ENCODE measurements at regions of chr1 and their contacts with region 1.

Region 1: GRCh38 chr1:205977402-205978014 is 25.7 kb downstream of the RAB7B start:
- DNase-seq: peak; percentile 78 to 88 (median 82)
- H3K4me3 ChIP-seq: no peak overlapping the region
- H3K27ac ChIP-seq: no peak overlapping the region
- H3K4me1 ChIP-seq: peaks cover 0 to 5% (median 0%) of the 10 kb centered on the region in 3 donors
- H3K27me3 ChIP-seq: no peaks in the 10 kb centered on the region
- CTCF ChIP-seq: peak; percentile 98

Region 2: DNA sequence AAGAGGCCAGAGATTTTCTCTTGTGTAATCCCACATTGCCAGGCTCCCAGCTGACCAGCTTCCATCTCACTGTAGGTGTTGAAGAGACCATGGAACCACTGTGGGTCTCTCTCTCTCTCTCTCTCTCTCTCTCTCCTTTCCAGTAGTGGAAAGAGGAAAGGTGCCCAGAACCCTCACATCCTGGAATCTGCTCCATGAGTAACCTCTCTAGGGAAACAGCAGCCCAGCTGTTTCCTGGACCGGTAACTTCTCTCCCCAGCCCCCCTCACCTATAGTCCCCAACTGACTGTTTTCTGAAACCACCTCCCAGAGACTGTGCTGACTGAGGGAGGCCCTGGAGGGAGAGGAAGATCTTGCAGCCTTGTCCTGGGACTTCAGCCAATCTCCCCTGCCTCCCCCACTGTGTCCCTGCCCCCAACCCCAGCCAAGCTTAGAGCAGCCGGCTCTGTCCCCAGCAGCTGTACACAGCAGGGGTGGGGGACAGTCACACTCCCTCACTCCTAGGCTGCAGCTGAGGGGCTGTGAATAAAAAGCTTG is 276.6 kb before region 1 on chr1:
- intact Hi-C with region 1: no loop called
- DNase-seq: peak; percentile 64 to 91 (median 71)
- H3K4me3 ChIP-seq: no peak overlapping the region
- H3K27ac ChIP-seq: no peak overlapping the region
- H3K4me1 ChIP-seq: peaks cover 0 to 2% (median 0%) of the 10 kb centered on the region in 3 donors
- H3K27me3 ChIP-seq: no peaks in the 10 kb centered on the region
- CTCF ChIP-seq: no peak

Region 3: GRCh38 chr1:205791568-205792180 is 185.8 kb before region 1 on chr1:
- intact Hi-C with region 1: loop called (anchors 5 kb)
- DNase-seq: peak in 3 of 5 donors; percentile 59 to 82 (median 65)
- H3K4me3 ChIP-seq: no peak overlapping the region
- H3K27ac ChIP-seq: no peak overlapping the region
- H3K4me1 ChIP-seq: no peaks in the 10 kb centered on the region
- H3K27me3 ChIP-seq: no peaks in the 10 kb centered on the region
- CTCF ChIP-seq: peak; percentile 78

Region 4: GRCh38 chr1:205896320-205896719 is 81.2 kb before region 1 on chr1:
- intact Hi-C with region 1: no loop called
- DNase-seq: no peak
- H3K4me3 ChIP-seq: no peak overlapping the region
- H3K27ac ChIP-seq: no peak overlapping the region
- H3K4me1 ChIP-seq: no peaks in the 10 kb centered on the region
- H3K27me3 ChIP-seq: no peaks in the 10 kb centered on the region
- CTCF ChIP-seq: no peak

Region 5: DNA sequence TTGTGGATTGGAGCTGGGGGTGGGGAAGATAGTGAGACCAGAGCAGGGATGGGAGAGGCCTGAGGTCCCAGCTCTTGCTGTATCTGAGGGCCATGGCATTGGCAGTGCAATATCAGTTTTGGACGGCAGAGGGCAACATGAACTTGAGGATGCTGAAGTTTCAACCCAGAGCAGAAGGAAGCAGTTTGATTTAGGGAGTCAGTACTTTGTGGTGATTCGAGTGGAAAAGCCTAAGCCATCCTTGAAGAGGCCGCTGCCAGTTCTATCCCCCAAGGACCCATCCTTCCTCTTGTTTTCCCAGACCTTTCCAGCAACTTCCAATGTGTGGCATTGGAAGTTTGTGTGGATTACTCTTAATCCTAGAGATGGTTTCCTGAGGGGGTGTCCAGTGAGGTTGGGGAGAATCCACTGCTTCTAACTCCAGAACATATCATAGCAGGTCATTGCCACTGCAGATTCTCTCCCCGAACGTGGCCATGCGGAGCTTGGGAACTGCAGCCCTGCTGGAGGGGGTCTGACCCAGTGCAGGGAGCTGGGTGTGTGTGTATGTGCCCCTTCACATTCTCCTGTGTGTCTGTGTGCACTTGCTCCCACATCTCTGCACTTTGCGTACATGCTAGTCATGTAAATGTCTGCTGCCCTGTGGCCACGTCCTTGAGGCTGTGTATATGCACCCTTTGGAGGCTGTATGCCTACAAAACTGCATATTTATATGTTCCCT is 58.3 kb before region 1 on chr1:
- intact Hi-C with region 1: loop called (anchors 5 kb)
- DNase-seq: peak; percentile 72 to 83 (median 81)
- H3K4me3 ChIP-seq: no peak overlapping the region
- H3K27ac ChIP-seq: no peak overlapping the region
- H3K4me1 ChIP-seq: peaks cover 0 to 21% (median 14%) of the 10 kb centered on the region in 3 donors
- H3K27me3 ChIP-seq: no peaks in the 10 kb centered on the region
- CTCF ChIP-seq: peak; percentile 97